ENCODE measurements at regions of chr16 and their contacts with region 1.

Region 1: GRCh38 chr16:47424846-47425245 is 36.0 kb downstream of the ITFG1 start:
- DNase-seq: no peak
- ATAC-seq: no peak
- H3K4me3 ChIP-seq: no peak overlapping the region
- H3K4me3 Mint-ChIP-seq: no peak overlapping the region
- H3K27ac ChIP-seq: no peak overlapping the region
- H3K27ac Mint-ChIP-seq: no peak overlapping the region
- H3K4me1 ChIP-seq: no peaks in the 10 kb centered on the region
- H3K4me1 Mint-ChIP-seq: no peaks in the 10 kb centered on the region
- H3K27me3 ChIP-seq: no peaks in the 10 kb centered on the region
- H3K27me3 Mint-ChIP-seq: no peaks in the 10 kb centered on the region
- CTCF ChIP-seq: no peak

Region 2: GRCh38 chr16:47475786-47476185 is 50.9 kb after region 1 on chr16:
- CTCF ChIA-PET with region 1: no interaction called
- POLR2A ChIA-PET with region 1: no interaction called
- intact Hi-C with region 1: no loop called
- DNase-seq: no peak
- ATAC-seq: no peak
- H3K4me3 ChIP-seq: no peak overlapping the region
- H3K4me3 Mint-ChIP-seq: no peak overlapping the region
- H3K27ac ChIP-seq: no peak overlapping the region
- H3K27ac Mint-ChIP-seq: no peak overlapping the region
- H3K4me1 ChIP-seq: no peaks in the 10 kb centered on the region
- H3K4me1 Mint-ChIP-seq: peaks cover 30% of the 10 kb centered on the region
- H3K27me3 ChIP-seq: no peaks in the 10 kb centered on the region
- H3K27me3 Mint-ChIP-seq: no peaks in the 10 kb centered on the region
- CTCF ChIP-seq: no peak

Region 3: DNA sequence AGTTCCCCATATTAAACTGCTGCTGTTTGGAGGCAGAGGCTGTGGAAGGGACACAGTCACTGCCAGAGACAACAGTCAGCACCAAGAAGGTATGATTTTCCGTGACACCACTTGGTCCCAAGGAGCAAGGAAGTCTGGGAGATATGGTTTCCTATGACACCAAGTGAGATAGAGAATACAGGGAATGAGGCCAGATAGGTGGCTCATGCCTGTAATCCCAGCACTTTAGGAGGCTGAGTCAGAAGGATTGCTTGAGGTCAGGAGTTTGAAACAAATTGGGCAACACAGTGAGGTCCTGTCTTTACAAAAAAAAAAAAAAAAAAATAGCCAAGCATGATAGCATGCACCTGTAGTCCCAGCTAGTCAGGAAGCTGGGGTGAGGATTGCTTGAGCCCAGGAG is 640.1 kb after region 1 on chr16:
- CTCF ChIA-PET with region 1: no interaction called
- POLR2A ChIA-PET with region 1: no interaction called
- intact Hi-C with region 1: loop called in 1 of 2 experiments (anchors 5 kb)
- DNase-seq: no peak
- ATAC-seq: no peak
- H3K4me3 ChIP-seq: no peak overlapping the region
- H3K4me3 Mint-ChIP-seq: no peak overlapping the region
- H3K27ac ChIP-seq: no peak overlapping the region
- H3K27ac Mint-ChIP-seq: no peak overlapping the region
- H3K4me1 ChIP-seq: no peaks in the 10 kb centered on the region
- H3K4me1 Mint-ChIP-seq: no peaks in the 10 kb centered on the region
- H3K27me3 ChIP-seq: no peaks in the 10 kb centered on the region
- H3K27me3 Mint-ChIP-seq: peaks cover 4% of the 10 kb centered on the region
- CTCF ChIP-seq: no peak